ENCODE measurements at regions of chr1 and their contacts with region 1.

Region 1: GRCh38 chr1:45490626-45491486 is at the start of gene TESK2:
- DNase-seq: peak; percentile 99
- H3K4me3 Mint-ChIP-seq: no peak within 1 kb of the TSS
- H3K27ac Mint-ChIP-seq: no peak within 1 kb of the TSS
- H3K4me1 Mint-ChIP-seq: peaks cover 13% of the 10 kb centered on the region
- H3K27me3 Mint-ChIP-seq: peaks cover 11% of the 10 kb centered on the region
- total RNA-seq, gene TESK2: 1.7 and 2.6 TPM in 2 replicates

Region 2: GRCh38 chr1:44730741-44731512 is 759.9 kb before region 1 on chr1 and contains the start of gene RNU5D-1:
- intact Hi-C with region 1: loop called (anchors 5 kb)
- DNase-seq: peak; percentile 97
- H3K4me3 Mint-ChIP-seq: peak within 1 kb of the TSS; percentile 65
- H3K27ac Mint-ChIP-seq: peak within 1 kb of the TSS; percentile 98
- H3K4me1 Mint-ChIP-seq: peaks cover 32% of the 10 kb centered on the region
- H3K27me3 Mint-ChIP-seq: no peaks in the 10 kb centered on the region
- total RNA-seq, gene RNU5D-1: not detected in 2 replicates

Region 3: DNA sequence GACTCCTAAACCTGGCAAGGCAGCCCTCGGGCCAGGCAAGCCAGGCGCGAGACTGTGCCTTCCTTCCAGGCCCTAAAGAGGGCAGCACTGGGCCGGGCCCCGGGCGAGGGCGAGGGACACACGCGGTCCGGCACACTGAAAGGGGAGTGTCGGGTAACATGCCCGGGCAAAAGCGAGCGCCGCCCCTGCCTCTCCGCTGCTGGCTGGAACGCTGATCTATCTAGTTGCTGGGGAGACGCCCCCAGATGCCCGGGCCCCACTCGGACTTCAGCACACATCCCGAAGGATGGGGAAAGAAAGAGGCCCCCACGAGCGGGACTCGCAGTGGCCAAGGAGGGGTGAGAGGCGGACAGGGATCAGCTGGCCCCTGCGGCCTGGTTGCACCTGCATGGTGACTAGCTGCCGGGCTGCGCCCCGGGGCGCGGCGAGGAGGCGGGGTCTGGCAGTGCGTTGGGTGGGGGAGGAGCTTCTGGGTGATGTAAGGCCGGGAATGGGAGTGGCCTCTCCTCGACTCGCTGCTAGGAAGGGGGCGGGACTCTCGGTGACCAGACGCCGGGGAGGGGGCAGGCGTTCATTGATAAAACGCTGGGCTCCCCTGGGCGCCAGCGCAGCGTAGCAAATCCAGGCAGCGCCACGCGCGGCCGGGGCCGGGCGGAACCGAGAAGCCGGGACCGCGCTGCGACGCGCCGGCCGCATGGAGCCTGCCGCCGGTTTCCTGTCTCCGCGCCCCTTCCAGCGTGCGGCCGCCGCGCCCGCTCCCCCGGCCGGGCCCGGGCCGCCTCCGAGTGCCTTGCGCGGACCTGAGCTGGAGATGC is 690.9 kb before region 1 on chr1 and contains the start of gene PLK3:
- intact Hi-C with region 1: loop called (anchors 10 kb)
- DNase-seq: peak; percentile 99
- H3K4me3 Mint-ChIP-seq: peak within 1 kb of the TSS; percentile 99
- H3K27ac Mint-ChIP-seq: peak within 1 kb of the TSS; percentile 100
- H3K4me1 Mint-ChIP-seq: peaks cover 35% of the 10 kb centered on the region
- H3K27me3 Mint-ChIP-seq: no peaks in the 10 kb centered on the region
- total RNA-seq, gene PLK3: 190 and 205 TPM in 2 replicates

Region 4: DNA sequence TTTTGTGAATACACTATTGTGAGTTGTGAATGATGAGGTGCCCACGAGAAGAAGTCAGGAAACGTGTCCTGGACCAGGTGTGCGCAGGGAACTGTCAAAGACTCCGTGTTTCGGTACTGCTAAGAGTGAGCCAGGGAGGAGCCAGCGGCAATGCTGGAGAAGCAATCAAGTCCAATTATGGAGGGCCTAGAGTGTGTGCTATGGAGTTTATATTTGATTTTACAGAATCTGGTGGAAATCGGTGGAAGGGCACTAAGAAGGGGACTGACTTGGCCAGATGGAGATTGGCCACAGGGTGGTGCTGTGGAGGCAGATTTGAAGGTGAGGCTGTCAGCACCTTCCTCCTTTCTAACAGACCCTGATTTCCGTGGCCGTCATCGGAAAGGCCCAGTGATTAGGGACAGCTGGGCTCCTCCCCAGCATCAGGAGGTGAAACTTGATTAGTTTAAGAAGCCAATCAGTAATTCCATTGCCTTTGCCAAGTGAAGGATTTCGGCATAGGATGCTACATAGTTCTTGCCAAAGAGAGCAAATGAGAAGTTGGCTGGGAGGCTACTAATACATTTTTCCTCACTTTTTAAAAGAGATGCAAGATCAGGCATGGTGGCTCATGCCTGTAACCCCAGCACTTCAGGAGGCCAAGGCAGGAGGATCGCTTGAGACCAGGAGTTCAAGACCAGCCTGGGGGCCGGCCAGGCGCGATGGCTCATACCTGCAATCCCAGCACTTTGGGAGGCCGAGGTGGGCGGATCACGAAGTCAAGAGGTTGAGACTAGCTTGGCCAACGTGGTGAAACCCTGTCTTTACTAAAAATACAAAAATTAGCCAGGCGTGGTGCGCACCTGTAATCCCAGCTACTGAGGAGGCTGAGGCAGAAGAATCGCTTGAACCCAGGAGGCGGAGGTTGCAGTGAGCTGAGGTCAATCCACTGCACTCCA is 654.8 kb before region 1 on chr1:
- intact Hi-C with region 1: loop called (anchors 10 kb)
- DNase-seq: peak; percentile 95
- H3K4me3 Mint-ChIP-seq: no peak overlapping the region
- H3K27ac Mint-ChIP-seq: peak overlapping the region; percentile 39
- H3K4me1 Mint-ChIP-seq: peaks cover 13% of the 10 kb centered on the region
- H3K27me3 Mint-ChIP-seq: no peaks in the 10 kb centered on the region

Region 5: GRCh38 chr1:45339789-45340570 is 150.9 kb before region 1 on chr1 and contains the starts of genes MUTYH and TOE1:
- intact Hi-C with region 1: loop called (anchors 1 kb)
- DNase-seq: peak; percentile 98
- H3K4me3 Mint-ChIP-seq: peak within 1 kb of the TSS; percentile 98
- H3K27ac Mint-ChIP-seq: peak within 1 kb of the TSS; percentile 99
- H3K4me1 Mint-ChIP-seq: peaks cover 45% of the 10 kb centered on the region
- H3K27me3 Mint-ChIP-seq: no peaks in the 10 kb centered on the region
- total RNA-seq, gene MUTYH: 55.6 and 57.0 TPM in 2 replicates
- total RNA-seq, gene TOE1: 38.2 and 44.8 TPM in 2 replicates

Region 6: DNA sequence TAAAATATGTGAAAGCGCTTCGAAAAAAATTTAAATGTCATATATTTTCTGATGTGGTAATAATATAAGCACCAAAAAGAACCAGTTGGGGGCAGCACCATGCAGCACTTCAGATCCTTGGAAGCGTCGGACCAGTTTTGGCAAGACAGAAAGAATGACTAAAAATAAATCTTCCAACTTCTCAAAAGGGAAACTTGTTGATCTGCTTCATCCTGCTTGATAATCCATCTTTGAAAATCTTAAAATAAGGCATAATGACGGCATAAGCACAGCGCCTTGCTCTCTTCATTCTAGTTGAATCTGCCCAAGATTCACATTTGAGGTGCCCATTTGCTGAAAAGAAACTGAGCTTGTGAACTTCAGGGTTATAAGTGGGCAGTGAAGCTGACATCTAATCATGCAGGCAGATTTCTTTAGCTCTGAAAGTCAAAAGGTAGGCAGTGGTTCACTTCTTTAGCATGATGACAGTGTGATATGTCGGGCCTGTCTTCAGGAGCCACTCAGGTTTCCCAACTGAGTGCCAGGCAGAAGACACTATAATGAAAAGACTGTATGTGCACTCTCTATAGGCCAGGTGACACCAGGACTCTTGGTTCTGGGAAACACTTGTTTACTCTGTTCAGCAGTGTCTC is 130.9 kb before region 1 on chr1:
- intact Hi-C with region 1: loop called (anchors 1 kb)
- DNase-seq: peak; percentile 82
- H3K4me3 Mint-ChIP-seq: no peak overlapping the region
- H3K27ac Mint-ChIP-seq: no peak overlapping the region
- H3K4me1 Mint-ChIP-seq: peaks cover 6% of the 10 kb centered on the region
- H3K27me3 Mint-ChIP-seq: no peaks in the 10 kb centered on the region

Region 7: DNA sequence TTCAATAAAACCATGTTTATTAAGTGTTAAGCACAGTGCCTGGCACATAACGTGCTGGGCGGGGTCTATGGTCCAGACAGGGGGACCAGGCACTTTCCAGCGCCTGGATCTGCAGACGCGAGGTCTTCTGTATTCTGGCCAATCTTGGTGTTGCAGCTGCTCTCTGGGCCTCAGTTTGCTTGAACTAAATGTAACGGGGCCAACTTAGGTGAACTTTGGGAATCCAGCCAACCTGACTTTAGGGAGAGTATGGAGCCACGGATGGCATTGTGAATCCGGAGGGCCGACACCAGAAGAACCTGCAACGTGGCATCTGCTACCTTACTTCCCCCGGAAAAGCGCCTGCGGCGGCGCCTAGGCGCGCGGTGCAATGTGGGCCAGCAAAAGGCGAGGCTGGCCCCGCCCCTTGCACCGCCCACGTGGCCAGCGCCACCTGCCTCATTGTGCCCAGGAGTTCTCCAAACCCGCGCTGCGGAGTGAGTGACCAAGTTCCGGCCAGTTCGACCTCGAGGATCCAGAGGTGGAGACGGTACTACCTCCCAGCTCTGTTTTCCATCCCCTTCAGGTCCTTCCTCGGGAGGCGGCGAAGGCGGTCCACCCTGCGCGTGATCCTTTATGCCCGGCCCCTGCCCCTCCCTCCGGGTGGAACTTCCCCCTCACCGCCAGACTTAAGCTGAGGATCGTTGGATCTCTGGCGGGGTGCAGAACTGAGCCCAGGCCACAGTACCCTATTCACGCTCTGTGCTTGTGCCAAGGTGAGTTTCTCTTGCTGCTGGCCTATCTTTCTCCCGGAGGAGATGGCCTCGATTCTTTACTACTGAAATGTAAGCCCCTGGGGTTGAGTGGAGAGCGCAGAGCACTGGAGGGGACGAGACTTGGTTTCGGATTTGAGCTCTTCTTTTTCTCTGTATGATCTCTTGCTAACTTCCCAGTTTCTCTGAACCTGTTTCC is 59.8 kb after region 1 on chr1 and contains the start of gene AKR1A1:
- intact Hi-C with region 1: loop called (anchors 1 kb)
- DNase-seq: peak; percentile 97
- H3K4me3 Mint-ChIP-seq: peak within 1 kb of the TSS; percentile 98
- H3K27ac Mint-ChIP-seq: peak within 1 kb of the TSS; percentile 94
- H3K4me1 Mint-ChIP-seq: peaks cover 17% of the 10 kb centered on the region
- H3K27me3 Mint-ChIP-seq: no peaks in the 10 kb centered on the region
- total RNA-seq, gene AKR1A1: 193 and 199 TPM in 2 replicates